ENCODE measurements at regions of chr11 and their contacts with region 1.

Region 1: DNA sequence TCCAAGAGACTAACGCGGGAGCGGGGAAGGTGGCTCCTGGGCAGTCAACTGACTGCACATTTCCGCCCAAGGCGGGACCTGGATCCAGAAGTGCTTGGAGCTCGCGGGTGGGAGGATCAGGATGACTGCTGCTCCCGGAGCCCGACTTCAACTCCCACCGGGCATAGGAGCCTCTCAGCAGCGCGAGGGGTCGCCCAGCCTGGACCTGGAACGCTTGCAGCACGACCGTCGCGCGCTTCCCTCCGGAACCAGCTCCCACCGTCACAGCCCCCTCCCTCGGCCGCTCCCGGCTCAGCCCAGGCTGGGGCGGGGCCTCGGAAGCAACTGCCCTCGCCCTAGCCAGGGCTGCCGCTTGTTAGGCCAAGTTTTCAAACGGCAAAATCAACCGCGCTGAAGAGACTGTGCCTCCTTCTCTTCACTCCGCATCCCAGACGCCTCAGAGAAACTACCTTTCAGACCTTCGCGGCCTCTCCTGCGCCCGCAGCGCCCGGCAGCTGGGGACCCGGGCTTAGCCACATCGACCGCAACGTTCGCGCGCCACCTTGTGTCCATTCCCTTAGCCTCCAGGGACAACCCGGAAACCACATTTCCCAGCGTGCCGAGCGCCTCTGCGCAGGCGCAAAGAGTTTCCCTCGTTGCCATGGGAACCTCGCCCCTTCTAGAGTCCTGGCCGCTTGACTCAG is 14.0 kb downstream of the SSH3 start:
- DNase-seq: peak; percentile 94 to 99
- ATAC-seq: peak; percentile 77

Region 2: GRCh38 chr11:67265633-67266423 is 51.5 kb before region 1 on chr11:
- intact Hi-C with region 1: loop called (anchors 2 to 5 kb)
- DNase-seq: peak; percentile 49 to 82
- ATAC-seq: peak; percentile 39

Region 3: GRCh38 chr11:67665541-67666362 is 348.4 kb after region 1 on chr11:
- intact Hi-C with region 1: no loop called
- DNase-seq: peak in 1 of 2 donors; percentile 69
- ATAC-seq: peak; percentile 88